ENCODE measurements at regions of chr11 and their contacts with region 1.

Region 1: GRCh38 chr11:107780775-107781174 is 68.9 kb upstream of the SLN start:
- DNase-seq: no peak
- H3K4me3 ChIP-seq: no peak overlapping the region
- H3K27ac ChIP-seq: no peak overlapping the region
- H3K4me1 ChIP-seq: peaks cover 7% of the 10 kb centered on the region; the same call in 1 of the 2 replicates
- H3K27me3 ChIP-seq: no peaks in the 10 kb centered on the region
- CTCF ChIP-seq: no peak; the same call in 1 of the 2 replicates

Region 2: DNA sequence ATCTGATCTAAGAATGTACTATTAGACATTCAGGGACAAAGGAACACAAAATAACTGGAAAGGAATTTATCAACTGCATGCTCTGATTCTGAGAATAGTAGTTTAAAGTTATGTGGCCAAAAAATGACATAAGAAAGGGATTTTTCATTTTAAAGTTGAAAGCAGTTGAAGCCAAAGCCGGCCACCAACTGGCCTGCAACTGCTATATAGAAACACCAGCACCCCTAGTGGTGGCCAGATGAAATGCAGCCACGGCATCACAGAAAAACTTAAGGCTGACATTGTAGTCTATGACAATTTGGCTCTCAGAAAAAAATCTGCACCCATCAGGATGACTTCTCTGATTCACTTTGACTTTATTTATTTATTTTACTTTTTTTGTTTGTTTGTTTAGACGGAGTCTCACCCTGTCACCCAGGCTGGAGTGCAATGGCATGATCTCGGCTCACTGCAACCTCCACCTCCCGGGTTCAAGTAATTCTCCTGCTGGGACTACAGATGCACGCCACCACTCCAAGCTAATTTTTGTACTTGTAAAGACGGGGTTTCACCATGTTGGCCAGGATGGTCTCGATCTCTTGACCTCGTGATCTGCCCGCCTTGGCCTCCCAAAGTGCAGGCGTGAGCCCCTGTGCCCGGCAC is 18.6 kb after region 1 on chr11:
- CTCF ChIA-PET with region 1: interaction called, 13 read pairs
- POLR2A ChIA-PET with region 1: no interaction called
- intact Hi-C with region 1: no loop called
- DNase-seq: peak; percentile 65 to 72
- H3K4me3 ChIP-seq: no peak overlapping the region
- H3K27ac ChIP-seq: no peak overlapping the region
- H3K4me1 ChIP-seq: no peaks in the 10 kb centered on the region
- H3K27me3 ChIP-seq: no peaks in the 10 kb centered on the region
- CTCF ChIP-seq: peak; percentile 99